ENCODE measurements at regions of chr4 and their contacts with region 1.

Region 1: DNA sequence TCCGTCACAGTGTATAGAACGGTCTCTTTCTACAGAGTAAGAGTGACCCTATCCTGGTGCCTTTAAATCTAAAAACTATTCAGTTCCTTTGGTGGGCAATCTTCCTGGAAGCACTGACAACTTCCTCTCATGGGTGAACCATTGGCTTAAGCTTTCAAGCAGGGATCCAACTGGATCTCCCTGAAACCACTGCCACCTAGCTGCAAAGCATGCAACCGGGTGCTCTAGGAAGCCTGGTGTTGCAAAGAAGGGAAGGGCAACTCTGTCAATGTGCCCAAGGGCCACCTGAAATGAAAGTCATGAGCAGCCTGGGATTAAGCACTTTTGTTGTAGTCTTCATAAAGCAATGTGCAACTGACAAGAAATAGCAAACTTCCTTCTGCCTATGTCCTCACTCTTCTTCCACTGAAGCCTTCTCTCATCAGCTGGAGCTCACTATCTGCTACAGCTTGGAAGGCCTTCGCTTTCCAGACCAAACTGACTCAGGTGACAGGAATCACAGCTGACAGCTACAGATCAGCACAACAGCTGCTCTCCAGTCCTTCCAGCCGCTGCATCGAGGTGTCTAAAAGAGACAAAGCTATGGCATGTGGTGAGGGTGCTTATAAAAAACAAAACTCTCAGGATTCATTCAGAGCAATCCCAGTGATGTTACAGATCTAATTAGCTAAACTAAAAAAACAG is 46.1 kb downstream of the SETD7 start:
- DNase-seq: no peak
- H3K4me3 ChIP-seq: no peak overlapping the region
- H3K27ac ChIP-seq: no peak overlapping the region
- H3K4me1 ChIP-seq: peaks cover 0 to 9% (median 2%) of the 10 kb centered on the region in 4 experiments; a peak in 3 of 7 replicates
- H3K27me3 ChIP-seq: no peaks in the 10 kb centered on the region
- CTCF ChIP-seq: peak; percentile 70 to 88 (median 80)
- EP300 ChIP-seq: no peak
- POLR2A ChIP-seq: no peak
- RAD21 ChIP-seq: peak; percentile 71 to 79

Region 2: DNA sequence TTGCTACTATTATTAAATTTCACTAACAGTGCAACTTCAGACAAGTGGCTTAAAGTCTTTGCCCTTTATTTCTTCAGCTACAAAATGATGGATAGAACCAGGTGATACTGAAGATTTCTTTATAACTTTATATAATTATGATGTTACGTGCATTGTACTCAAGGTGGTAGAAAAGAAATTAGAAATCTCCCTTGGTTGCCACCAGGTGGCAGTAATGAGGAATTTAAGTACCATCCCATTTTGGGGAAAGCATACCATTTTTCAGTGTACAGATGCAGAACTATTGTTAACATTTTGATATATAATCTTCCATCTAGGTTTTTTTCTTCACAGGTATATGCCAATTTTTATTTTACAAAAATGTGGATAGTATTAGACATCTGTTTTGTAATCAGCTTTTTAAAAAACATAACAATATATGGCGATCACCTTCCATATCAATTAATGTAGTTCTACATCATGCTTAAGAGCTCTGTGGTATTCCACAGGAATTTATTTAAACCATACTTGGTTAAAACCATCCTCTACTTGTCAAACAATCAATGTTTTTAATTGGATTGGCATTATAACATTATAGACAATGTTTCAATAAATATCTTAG is 93.7 kb before region 1 on chr4:
- CTCF ChIA-PET with region 1: interaction called, 14 read pairs
- POLR2A ChIA-PET with region 1: no interaction called
- DNase-seq: no peak
- H3K4me3 ChIP-seq: no peak overlapping the region
- H3K27ac ChIP-seq: no peak overlapping the region
- H3K4me1 ChIP-seq: no peaks in the 10 kb centered on the region
- H3K27me3 ChIP-seq: no peaks in the 10 kb centered on the region
- CTCF ChIP-seq: peak in 2 of 3 experiments; percentile 53 to 55; a peak in 2 of 4 replicates
- EP300 ChIP-seq: no peak
- POLR2A ChIP-seq: no peak
- RAD21 ChIP-seq: peak; percentile 54 to 57

Region 3: DNA sequence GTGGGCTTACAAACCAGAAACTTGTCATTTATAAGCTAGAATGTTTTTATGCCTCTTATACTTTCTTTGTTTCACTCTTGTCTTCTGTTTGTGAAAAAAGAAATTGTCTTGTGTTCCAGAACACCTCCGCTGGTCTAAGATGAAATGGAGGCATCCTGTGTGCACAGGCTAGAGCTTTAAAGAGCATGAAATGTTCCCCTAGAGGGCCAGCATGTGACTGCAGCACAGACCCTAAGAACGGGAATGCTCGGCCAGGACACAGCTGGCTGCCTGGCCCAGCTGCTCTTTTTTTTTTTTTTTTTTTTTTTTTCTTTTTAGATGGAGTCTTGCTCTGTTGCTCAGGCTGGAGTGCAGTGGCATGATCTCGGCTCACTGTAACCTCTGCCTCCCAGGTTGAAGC is 12.6 kb after region 1 on chr4:
- CTCF ChIA-PET with region 1: interaction called, 12 read pairs
- POLR2A ChIA-PET with region 1: interaction called, 5 read pairs
- DNase-seq: no peak
- H3K4me3 ChIP-seq: no peak overlapping the region
- H3K27ac ChIP-seq: no peak overlapping the region
- H3K4me1 ChIP-seq: no peaks in the 10 kb centered on the region
- H3K27me3 ChIP-seq: no peaks in the 10 kb centered on the region
- CTCF ChIP-seq: peak; percentile 11 to 37 (median 28); a peak in 3 of 4 replicates
- EP300 ChIP-seq: no peak
- POLR2A ChIP-seq: no peak
- RAD21 ChIP-seq: peak in 1 of 2 experiments; percentile 20; a peak in 1 of 4 replicates

Measured in H1 (cell line).